ENCODE measurements at regions of chr1 and their contacts with region 1.

Region 1: DNA sequence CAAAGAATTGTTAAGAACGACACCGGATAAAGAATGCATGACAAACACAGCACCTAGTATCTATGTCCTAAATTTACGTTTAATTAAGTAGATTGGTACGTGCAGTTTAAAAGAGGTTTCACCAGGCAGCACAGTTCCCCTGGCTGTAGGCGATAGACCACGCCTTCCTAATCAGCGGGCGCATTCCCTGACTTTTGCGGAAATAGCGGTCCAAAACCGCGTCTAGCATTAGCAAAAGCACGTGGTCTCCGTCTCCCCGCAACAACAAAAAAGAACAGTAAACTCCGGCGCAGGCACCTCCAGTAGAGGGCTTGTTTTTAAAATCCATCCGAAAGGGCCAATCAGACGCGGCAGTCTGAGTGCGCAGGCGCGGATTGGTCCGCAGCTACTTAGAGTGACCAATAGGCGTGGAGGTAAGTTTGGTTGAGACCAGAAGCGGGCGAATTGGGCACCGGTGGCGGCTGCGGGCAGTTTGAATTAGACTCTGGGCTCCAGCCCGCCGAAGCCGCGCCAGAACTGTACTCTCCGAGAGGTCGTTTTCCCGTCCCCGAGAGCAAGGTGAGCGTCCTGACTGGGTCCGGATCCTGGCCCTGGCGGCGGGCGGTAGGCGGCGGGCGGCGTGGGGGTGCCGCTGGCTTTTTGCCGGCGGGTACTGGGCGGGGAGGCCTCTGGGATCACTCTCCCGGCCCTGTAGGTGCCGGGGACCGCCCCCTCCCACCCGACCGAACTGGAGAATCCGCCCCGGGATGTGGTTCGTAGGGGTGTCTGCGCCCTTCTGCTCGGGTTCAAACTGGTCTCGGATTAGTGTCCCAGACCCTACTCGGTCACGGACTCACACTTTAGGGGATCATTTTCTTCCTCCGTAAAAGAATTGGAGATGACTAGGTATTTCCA is at the start of gene CENPF:
- DNase-seq: peak; percentile 97
- H3K4me3 ChIP-seq: peak within 1 kb of the TSS; percentile 94
- H3K27ac ChIP-seq: peak within 1 kb of the TSS; percentile 77
- H3K4me1 ChIP-seq: peaks cover 7% of the 10 kb centered on the region
- CTCF ChIP-seq: no peak
- total RNA-seq, gene CENPF: 110 and 161 TPM in 2 replicates

Region 2: DNA sequence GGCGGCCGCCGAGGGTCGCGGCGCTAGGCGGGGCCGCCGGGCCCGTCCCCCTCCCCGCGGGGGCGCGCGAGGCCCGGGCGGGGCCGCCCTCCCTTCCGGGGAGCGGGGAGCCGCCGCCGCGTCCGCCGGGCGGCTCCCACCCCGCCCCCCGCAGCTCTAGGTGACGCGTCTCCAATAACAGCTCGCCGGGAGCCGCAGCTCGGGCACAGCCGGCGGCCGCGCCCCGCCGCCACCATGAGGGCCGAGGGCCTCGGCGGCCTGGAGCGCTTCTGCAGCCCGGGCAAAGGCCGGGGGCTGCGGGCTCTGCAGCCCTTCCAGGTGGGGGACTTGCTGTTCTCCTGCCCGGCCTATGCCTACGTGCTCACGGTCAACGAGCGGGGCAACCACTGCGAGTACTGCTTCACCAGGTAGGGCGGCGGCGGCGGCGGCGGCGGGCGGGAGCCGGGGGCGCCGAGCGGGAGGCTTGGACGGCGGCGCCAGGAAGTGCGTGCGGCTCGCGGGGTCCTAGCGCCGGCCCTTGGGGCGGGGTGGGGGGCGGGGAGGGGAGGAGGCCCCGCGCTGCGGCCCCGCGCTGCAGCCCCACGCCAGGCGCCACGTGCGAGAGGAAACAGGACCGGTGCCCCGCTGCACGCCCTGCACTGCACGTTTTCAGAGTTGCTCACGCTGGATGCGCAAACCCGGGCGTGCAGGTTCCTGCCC is 321.8 kb before region 1 on chr1 and contains the start of gene SMYD2:
- CTCF ChIA-PET with region 1: no interaction called
- POLR2A ChIA-PET with region 1: no interaction called
- intact Hi-C with region 1: loop called (anchors 5 kb)
- DNase-seq: peak; percentile 80
- H3K4me3 ChIP-seq: peak within 1 kb of the TSS; percentile 72
- H3K27ac ChIP-seq: peak within 1 kb of the TSS; percentile 73
- H3K4me1 ChIP-seq: peaks cover 21% of the 10 kb centered on the region
- CTCF ChIP-seq: no peak
- total RNA-seq, gene SMYD2: 26.5 and 36.5 TPM in 2 replicates

Region 3: GRCh38 chr1:214685906-214686305 is 82.9 kb after region 1 on chr1:
- CTCF ChIA-PET with region 1: no interaction called
- POLR2A ChIA-PET with region 1: no interaction called
- intact Hi-C with region 1: no loop called
- DNase-seq: no peak
- H3K4me3 ChIP-seq: no peak overlapping the region
- H3K27ac ChIP-seq: no peak overlapping the region
- H3K4me1 ChIP-seq: no peaks in the 10 kb centered on the region
- CTCF ChIP-seq: no peak

Measured in OCI-LY7 (cell line).